Posterior vena cava (tissue), 2 donors: ENCODE measurements at regions of chr16 and their contacts with region 1.

Region 1: DNA sequence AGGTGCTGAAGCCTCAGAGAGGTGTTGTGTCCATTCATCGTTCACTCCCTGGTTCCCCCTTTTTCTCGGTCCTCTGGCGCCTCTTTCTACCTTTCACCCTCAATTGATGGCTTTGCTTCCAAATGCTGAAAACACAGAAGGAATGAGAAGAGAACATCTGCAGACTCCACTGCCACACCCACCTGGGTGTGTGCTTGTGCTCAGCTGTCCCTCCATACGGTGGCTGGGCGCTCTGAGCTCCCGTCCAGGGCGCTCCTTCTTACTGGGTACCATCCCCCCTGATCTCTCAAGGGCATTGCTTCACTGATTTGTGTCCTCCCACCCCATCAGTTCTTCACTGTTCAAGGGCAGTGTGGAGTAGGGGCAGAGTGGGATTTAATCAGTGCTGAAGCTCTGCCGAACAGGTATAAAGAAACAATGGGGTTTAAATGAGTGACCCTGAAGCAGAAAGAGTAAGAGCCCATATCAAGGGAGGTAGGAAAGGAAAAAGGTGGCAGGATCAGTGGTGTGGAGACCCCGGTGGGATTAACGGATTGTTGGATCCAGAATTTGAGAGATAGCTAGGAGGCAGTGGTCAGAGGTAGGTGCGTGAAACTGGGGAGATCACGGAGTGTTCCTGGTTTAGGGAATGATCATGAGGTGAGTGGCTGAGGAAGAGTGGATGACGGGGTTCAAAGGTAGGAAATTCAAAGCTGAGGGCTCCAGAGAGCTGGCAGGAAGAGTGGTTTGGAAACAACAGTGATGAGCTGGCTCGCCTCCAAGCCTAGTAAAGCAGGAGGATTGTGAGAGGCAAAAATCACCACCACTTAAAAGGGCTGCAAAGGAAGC is 40.8 kb downstream of the MRTFB start:
- DNase-seq: no peak

Region 2: GRCh38 chr16:14486520-14487303 is 374.8 kb after region 1 on chr16:
- intact Hi-C with region 1: loop called in 1 of 2 experiments (anchors 10 kb)
- DNase-seq: peak; percentile 94